ENCODE measurements at regions of chr12 and their contacts with region 1.

Region 1: DNA sequence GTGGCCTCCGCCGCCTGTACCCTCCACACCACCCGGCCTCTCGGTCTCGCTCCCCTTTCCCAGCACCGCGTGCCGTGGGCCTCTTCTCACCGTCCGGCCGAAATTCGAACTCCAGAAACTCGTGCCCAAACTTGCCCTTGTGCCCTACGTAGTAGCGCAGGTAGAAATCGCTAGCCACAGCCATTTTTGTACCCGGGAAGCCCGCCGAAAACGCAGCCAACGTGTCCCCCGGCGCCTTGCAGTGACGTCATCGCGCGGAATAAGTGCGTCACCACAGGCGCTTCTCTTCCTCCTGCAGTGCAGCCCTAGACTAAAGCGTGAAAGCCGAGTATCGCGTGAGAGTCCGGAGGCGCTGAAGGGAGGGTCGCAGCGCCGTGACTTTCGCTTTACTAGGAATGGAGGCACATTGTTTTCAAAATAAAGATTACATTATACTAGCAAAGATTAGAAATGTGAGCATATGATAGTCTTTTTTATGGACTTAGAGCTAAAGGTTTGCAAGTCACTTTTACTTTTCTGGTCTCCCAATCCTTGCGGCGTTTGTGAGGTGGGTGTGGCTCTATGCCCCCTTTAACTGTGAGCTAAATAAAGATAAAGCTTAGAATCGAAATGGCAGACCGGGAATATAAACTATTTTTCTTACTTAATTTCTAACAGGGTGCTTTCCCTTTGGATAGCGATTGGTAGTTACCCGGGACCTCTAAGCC is at the start of gene MAGOHB:
- DNase-seq: peak; percentile 99
- ATAC-seq: peak; percentile 96
- H3K4me3 Mint-ChIP-seq: peak within 1 kb of the TSS; percentile 99
- H3K27ac Mint-ChIP-seq: peak within 1 kb of the TSS; percentile 100
- H3K4me1 Mint-ChIP-seq: peaks cover 25% of the 10 kb centered on the region
- H3K27me3 Mint-ChIP-seq: peaks cover 6% of the 10 kb centered on the region
- total RNA-seq, gene MAGOHB: 66.3 to 89.3 TPM

Region 2: GRCh38 chr12:10364815-10365622 is 248.5 kb before region 1 on chr12:
- CTCF ChIA-PET with region 1: no interaction called
- POLR2A ChIA-PET with region 1: interaction called, 4 read pairs
- intact Hi-C with region 1: loop called in 1 of 2 experiments (anchors 1 kb)
- DNase-seq: peak; percentile 76
- ATAC-seq: peak; percentile 84
- H3K4me3 Mint-ChIP-seq: no peak overlapping the region
- H3K27ac Mint-ChIP-seq: no peak overlapping the region
- H3K4me1 Mint-ChIP-seq: peaks cover 3% of the 10 kb centered on the region
- H3K27me3 Mint-ChIP-seq: no peaks in the 10 kb centered on the region

Region 3: GRCh38 chr12:10721651-10722501 is 108.4 kb after region 1 on chr12:
- CTCF ChIA-PET with region 1: no interaction called
- POLR2A ChIA-PET with region 1: no interaction called
- intact Hi-C with region 1: loop called (anchors 1 to 2 kb)
- DNase-seq: peak; percentile 74
- ATAC-seq: peak; percentile 68
- H3K4me3 Mint-ChIP-seq: peak overlapping the region; percentile 91
- H3K27ac Mint-ChIP-seq: peak overlapping the region; percentile 91
- H3K4me1 Mint-ChIP-seq: peaks cover 25% of the 10 kb centered on the region
- H3K27me3 Mint-ChIP-seq: peaks cover 29% of the 10 kb centered on the region

Measured in activated CD4-positive, alpha-beta T cell treated with anti-CD3 and anti-CD28 coated beads for 36 hours (primary cell).